ENCODE measurements at regions of chr7 and their contacts with region 1.

Region 1: GRCh38 chr7:140517546-140518369 is 38.5 kb upstream of the MKRN1 start:
- DNase-seq: peak; percentile 92
- ATAC-seq: peak; percentile 83
- H3K4me3 ChIP-seq: no peak overlapping the region
- H3K27ac ChIP-seq: no peak overlapping the region
- H3K4me1 ChIP-seq: 0 out of 2 replicates have a peak, but pooled peaks cover 8% of the 10 kb centered on the region
- H3K27me3 ChIP-seq: no peaks in the 10 kb centered on the region
- CTCF ChIP-seq: peak; percentile 82

Region 2: GRCh38 chr7:140479062-140479738 is 38.6 kb before region 1 on chr7 and contains the start of gene MKRN1:
- CTCF ChIA-PET with region 1: interaction called, 16 read pairs
- POLR2A ChIA-PET with region 1: no interaction called
- intact Hi-C with region 1: loop called (anchors 1 kb)
- DNase-seq: peak; percentile 95
- ATAC-seq: peak; percentile 93
- H3K4me3 ChIP-seq: peak within 1 kb of the TSS; percentile 99
- H3K27ac ChIP-seq: peak within 1 kb of the TSS; percentile 58
- H3K4me1 ChIP-seq: no peaks in the 10 kb centered on the region; the same call in 1 of the 2 replicates
- H3K27me3 ChIP-seq: no peaks in the 10 kb centered on the region
- CTCF ChIP-seq: no peak
- total RNA-seq, gene MKRN1: 71.9 and 78.5 TPM in 2 replicates

Region 3: DNA sequence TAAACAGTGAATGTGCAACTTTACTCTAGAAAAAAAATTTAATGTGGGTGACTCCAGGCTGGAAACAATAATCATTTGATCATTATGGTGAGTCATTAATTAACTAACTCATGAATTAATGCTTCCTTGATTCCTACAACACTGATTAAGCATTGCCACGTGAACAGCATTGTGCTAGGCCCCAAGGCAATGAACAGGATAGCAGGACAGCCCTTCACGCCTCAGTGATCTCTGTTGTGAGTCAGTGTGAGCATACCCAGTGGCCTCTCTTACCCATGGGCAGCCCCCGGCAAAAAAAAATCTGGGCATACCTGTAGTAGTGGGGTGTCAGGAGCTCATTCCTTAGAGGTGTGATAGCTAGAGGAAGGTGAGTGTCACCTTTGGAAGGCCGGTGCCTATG is 46.9 kb after region 1 on chr7:
- CTCF ChIA-PET with region 1: interaction called, 3 read pairs
- POLR2A ChIA-PET with region 1: no interaction called
- intact Hi-C with region 1: loop called (anchors 2 kb)
- DNase-seq: peak; percentile 66
- ATAC-seq: peak; percentile 58
- H3K4me3 ChIP-seq: no peak overlapping the region
- H3K27ac ChIP-seq: peak overlapping the region; percentile 28
- H3K4me1 ChIP-seq: peaks cover 36% of the 10 kb centered on the region
- H3K27me3 ChIP-seq: no peaks in the 10 kb centered on the region
- CTCF ChIP-seq: no peak

Region 4: GRCh38 chr7:140593672-140593982 is 75.9 kb after region 1 on chr7:
- CTCF ChIA-PET with region 1: interaction called, 3 read pairs
- POLR2A ChIA-PET with region 1: no interaction called
- intact Hi-C with region 1: loop called (anchors 1 kb)
- DNase-seq: no peak
- ATAC-seq: no peak
- H3K4me3 ChIP-seq: no peak overlapping the region
- H3K27ac ChIP-seq: no peak overlapping the region
- H3K4me1 ChIP-seq: peaks cover 34% of the 10 kb centered on the region
- H3K27me3 ChIP-seq: no peaks in the 10 kb centered on the region
- CTCF ChIP-seq: no peak

Region 5: GRCh38 chr7:140607441-140607989 is 89.8 kb after region 1 on chr7:
- CTCF ChIA-PET with region 1: interaction called, 9 read pairs
- POLR2A ChIA-PET with region 1: no interaction called
- intact Hi-C with region 1: loop called (anchors 1 kb)
- DNase-seq: peak; percentile 80
- ATAC-seq: peak; percentile 52
- H3K4me3 ChIP-seq: no peak overlapping the region
- H3K27ac ChIP-seq: peak overlapping the region; percentile 96
- H3K4me1 ChIP-seq: peaks cover 69% of the 10 kb centered on the region
- H3K27me3 ChIP-seq: no peaks in the 10 kb centered on the region
- CTCF ChIP-seq: no peak

Region 6: GRCh38 chr7:140641524-140642195 is 123.9 kb after region 1 on chr7:
- CTCF ChIA-PET with region 1: interaction called, 12 read pairs
- POLR2A ChIA-PET with region 1: no interaction called
- intact Hi-C with region 1: no loop called
- DNase-seq: no peak
- ATAC-seq: no peak
- H3K4me3 ChIP-seq: peak overlapping the region; percentile 66; the same call in 1 of the 2 replicates
- H3K27ac ChIP-seq: no peak overlapping the region
- H3K4me1 ChIP-seq: peaks cover 15% of the 10 kb centered on the region; the same call in 1 of the 2 replicates
- H3K27me3 ChIP-seq: no peaks in the 10 kb centered on the region
- CTCF ChIP-seq: no peak

Region 7: DNA sequence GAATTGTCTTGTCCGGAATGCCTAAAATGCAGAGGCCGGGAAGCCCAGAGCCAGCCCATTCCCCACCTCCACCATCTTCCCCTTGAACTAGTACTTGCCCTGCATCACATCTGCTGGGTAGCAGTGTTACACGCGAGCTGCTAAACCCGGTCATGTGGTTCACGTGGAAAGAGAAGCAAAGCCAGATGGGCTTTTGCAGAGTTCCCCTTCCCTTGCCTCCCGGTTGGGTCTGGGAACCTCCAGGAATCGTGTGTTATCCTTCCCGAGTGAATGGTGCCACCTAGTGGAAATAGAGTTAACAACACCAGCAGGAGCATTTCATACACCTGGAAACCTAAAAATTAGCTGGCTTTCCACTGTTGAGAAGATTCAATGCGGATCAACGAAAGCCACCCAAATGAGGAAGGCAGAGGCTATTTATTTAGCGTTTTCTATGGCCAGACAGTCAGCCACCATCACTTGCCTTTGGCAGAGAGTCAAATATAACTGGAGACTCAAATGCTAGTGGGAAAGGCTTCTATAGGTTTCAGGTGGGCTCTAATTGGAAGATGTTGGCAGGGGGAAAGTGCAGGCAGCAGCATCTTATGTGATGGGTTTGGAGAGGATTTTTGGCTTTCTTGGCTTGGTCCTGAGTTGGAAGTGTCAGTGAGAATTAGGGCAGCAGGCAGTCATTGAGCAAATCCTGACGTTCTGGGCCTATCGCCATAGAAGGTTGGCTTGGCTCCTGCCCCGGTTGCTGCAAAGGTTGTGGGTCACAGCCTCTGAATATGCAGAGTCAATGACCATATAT is 135.8 kb after region 1 on chr7:
- CTCF ChIA-PET with region 1: interaction called, 22 read pairs
- POLR2A ChIA-PET with region 1: no interaction called
- intact Hi-C with region 1: loop called (anchors 1 kb)
- DNase-seq: peak; percentile 87
- ATAC-seq: peak; percentile 68
- H3K4me3 ChIP-seq: no peak overlapping the region
- H3K27ac ChIP-seq: no peak overlapping the region
- H3K4me1 ChIP-seq: peaks cover 26% of the 10 kb centered on the region
- H3K27me3 ChIP-seq: no peaks in the 10 kb centered on the region
- CTCF ChIP-seq: peak; percentile 90